Sigmoid colon (tissue), 7 donors: ENCODE measurements at regions of chr10 and their contacts with region 1.

Region 1: GRCh38 chr10:68901104-68901927 is at the start of gene DDX50:
- DNase-seq: peak; percentile 99
- H3K4me3 ChIP-seq: peak within 1 kb of the TSS; percentile 75 to 91 (median 88)
- H3K27ac ChIP-seq: peak within 1 kb of the TSS; percentile 94 to 99 (median 98)
- H3K4me1 ChIP-seq: peaks cover 0 to 26% (median 24%) of the 10 kb centered on the region in 4 donors
- H3K27me3 ChIP-seq: no peaks in the 10 kb centered on the region
- CTCF ChIP-seq: no peak
- EP300 ChIP-seq: peak in 1 of 4 donors; percentile 43
- POLR2A ChIP-seq: peak; percentile 70 to 76
- total RNA-seq, gene DDX50: 39.1 to 64.3 (median 51.6) TPM

Region 2: GRCh38 chr10:68406815-68407548 is 494.3 kb before region 1 on chr10 and contains the start of gene RUFY2:
- intact Hi-C with region 1: loop called (anchors 10 kb)
- DNase-seq: peak; percentile 87
- H3K4me3 ChIP-seq: peak within 1 kb of the TSS; percentile 94 to 98 (median 97)
- H3K27ac ChIP-seq: peak within 1 kb of the TSS; percentile 92 to 97 (median 96)
- H3K4me1 ChIP-seq: peaks cover 0 to 16% (median 9%) of the 10 kb centered on the region in 4 donors
- H3K27me3 ChIP-seq: no peaks in the 10 kb centered on the region
- CTCF ChIP-seq: peak in 3 of 4 experiments; percentile 40 to 76 (median 41)
- EP300 ChIP-seq: no peak
- POLR2A ChIP-seq: no peak
- total RNA-seq, gene RUFY2: 19.3 to 34.9 (median 26.7) TPM

Region 3: DNA sequence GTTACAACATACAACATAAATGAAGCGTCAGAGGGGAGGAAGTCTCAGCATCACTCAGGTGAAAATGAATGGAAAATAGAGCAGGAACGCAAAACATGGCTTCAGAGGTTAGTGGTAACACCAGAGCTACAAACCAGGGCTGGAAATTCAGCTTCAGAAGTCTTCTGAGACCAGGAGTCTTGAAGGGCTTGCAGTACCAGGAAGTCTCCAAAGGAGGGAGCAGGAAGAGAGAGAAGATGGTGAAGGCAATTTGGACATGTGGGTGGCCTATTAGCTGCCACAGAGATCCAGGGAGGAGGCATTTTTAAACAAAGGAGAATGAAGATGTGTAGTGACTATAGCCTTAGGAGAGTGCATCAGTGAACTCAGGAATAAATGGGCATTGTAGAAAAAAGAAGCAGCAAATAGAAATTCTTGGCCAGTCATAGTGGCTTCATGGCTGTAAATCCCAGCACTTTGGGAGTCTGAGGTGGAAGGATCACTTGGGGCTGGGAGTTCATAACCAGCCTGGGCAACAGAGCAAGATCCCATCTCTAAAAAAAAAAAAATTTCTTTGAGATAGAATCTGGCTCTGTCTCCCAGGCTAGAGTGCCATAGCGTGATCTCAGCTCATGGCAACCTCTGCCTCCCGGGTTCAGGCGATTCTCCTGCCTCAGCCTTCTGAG is 350.4 kb before region 1 on chr10:
- intact Hi-C with region 1: loop called (anchors 10 kb)
- DNase-seq: no peak
- H3K4me3 ChIP-seq: no peak overlapping the region
- H3K27ac ChIP-seq: no peak overlapping the region
- H3K4me1 ChIP-seq: no peaks in the 10 kb centered on the region
- H3K27me3 ChIP-seq: no peaks in the 10 kb centered on the region
- CTCF ChIP-seq: peak; percentile 25 to 87 (median 73)
- EP300 ChIP-seq: no peak
- POLR2A ChIP-seq: no peak

Region 4: GRCh38 chr10:68792115-68792514 is 109.2 kb before region 1 on chr10:
- intact Hi-C with region 1: loop called (anchors 5 kb)
- DNase-seq: no peak
- H3K4me3 ChIP-seq: no peak overlapping the region
- H3K27ac ChIP-seq: no peak overlapping the region
- H3K4me1 ChIP-seq: no peaks in the 10 kb centered on the region
- H3K27me3 ChIP-seq: no peaks in the 10 kb centered on the region
- CTCF ChIP-seq: no peak
- EP300 ChIP-seq: no peak
- POLR2A ChIP-seq: no peak

Region 5: GRCh38 chr10:69123747-69124562 is 222.6 kb after region 1 on chr10 and contains the start of gene VPS26A:
- intact Hi-C with region 1: loop called (anchors 5 kb)
- DNase-seq: peak; percentile 100
- H3K4me3 ChIP-seq: peak within 1 kb of the TSS; percentile 90 to 95 (median 94)
- H3K27ac ChIP-seq: peak within 1 kb of the TSS; percentile 95 to 99 (median 98)
- H3K4me1 ChIP-seq: peaks cover 0 to 23% (median 17%) of the 10 kb centered on the region in 4 donors
- H3K27me3 ChIP-seq: no peaks in the 10 kb centered on the region
- CTCF ChIP-seq: peak in 3 of 4 experiments; percentile 5 to 8 (median 6)
- EP300 ChIP-seq: peak in 1 of 4 donors; percentile 23
- POLR2A ChIP-seq: peak; percentile 97
- total RNA-seq, gene VPS26A: 35.7 to 59.2 (median 44.7) TPM